Breast epithelium (tissue), 4 donors: ENCODE measurements at regions of chr1 and their contacts with region 1.

Region 1: GRCh38 chr1:71245246-71245645 is 164.4 kb upstream of the ZRANB2 start:
- DNase-seq: no peak
- H3K4me3 ChIP-seq: no peak overlapping the region
- H3K27ac ChIP-seq: no peak overlapping the region
- H3K4me1 ChIP-seq: no peaks in the 10 kb centered on the region
- H3K27me3 ChIP-seq: no peaks in the 10 kb centered on the region
- CTCF ChIP-seq: no peak
- POLR2A ChIP-seq: no peak

Region 2: DNA sequence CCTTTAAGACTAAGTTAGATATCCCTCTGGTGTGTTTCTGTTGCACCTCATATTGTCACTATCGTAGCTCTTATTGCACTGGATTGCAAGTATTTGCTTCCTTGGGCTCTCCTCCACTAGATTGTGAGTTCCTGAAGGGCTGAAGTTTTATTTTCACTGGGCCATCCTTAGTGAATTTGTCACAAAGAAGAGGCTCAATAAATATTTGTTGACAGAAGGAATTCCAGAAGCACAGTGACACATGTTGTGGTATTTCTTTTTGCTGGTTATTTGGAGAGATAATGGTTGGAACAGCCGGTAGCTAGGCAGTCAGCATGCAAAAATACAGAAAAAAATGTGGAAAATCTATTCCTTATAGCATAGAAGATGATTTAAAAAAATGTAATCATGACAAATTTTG is 34.5 kb before region 1 on chr1:
- intact Hi-C with region 1: loop called (anchors 2 kb)
- DNase-seq: no peak
- H3K4me3 ChIP-seq: no peak overlapping the region
- H3K27ac ChIP-seq: no peak overlapping the region
- H3K4me1 ChIP-seq: no peaks in the 10 kb centered on the region
- H3K27me3 ChIP-seq: no peaks in the 10 kb centered on the region
- CTCF ChIP-seq: no peak
- POLR2A ChIP-seq: no peak